ENCODE measurements at regions of chr2 and their contacts with region 1.

Region 1: DNA sequence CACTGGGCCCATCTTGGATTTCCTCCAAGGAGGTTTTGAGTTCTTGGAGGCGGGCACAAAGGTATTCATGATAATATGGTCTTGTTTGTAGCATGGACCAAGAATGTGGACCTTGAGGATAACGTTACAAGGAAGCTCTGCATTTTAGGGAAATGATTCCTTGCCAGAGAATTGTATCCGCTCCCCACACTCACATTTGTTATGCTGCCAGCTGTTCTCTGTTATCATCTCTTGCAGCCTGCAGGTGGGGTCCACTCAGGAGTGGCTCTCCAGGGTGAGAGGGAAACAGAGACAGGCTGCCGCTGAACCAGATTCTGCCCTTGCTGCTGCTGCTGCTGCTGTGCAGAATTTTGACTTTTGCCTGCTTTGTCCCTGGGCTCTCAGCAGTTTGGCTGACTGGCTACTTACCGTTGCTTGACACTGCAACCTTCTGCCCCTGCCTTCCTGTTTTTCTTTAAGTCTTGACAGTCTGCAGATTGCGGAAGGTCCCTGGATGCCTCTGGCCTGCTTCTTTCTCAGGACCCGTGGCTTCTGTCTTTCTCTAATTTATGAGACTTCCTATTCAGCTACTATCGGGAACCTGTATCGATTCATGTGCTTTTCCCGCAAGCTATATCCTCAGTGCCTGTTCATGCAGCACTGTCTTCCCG is 122.3 kb upstream of the DOCK10 start:
- DNase-seq: no peak
- ATAC-seq: peak; percentile 27
- H3K4me3 ChIP-seq: no peak overlapping the region
- H3K27ac ChIP-seq: no peak overlapping the region
- H3K4me1 ChIP-seq: peaks cover 5% of the 10 kb centered on the region
- H3K27me3 ChIP-seq: no peaks in the 10 kb centered on the region
- CTCF ChIP-seq: no peak
- POLR2A ChIP-seq: no peak
- RAD21 ChIP-seq: no peak

Region 2: DNA sequence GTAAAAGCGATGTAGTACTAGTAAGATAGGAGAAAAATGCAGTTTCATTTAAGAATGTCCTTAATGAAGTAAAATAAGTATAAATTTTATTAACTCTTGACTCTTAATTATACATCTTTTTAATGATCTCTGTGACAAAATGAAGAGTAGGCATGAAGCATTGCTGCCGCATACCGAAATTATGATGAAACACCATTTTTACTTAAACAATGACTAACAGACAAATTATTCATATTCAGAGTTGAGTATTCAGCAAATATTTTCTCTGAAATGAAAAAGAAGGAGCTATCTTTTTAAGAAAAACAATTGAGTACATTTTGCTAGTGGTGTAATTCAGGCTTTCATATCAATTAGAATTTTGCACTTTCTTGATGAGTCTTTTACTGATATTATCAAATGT is 28.3 kb after region 1 on chr2:
- CTCF ChIA-PET with region 1: no interaction called
- POLR2A ChIA-PET with region 1: no interaction called
- dilution Hi-C with region 1: no loop called
- in situ Hi-C with region 1: no loop called
- intact Hi-C with region 1: no loop called
- DNase-seq: peak; percentile 47
- ATAC-seq: peak; percentile 38; the same call in 1 of the 2 replicates
- H3K4me3 ChIP-seq: no peak overlapping the region
- H3K27ac ChIP-seq: no peak overlapping the region
- H3K4me1 ChIP-seq: peaks cover 2% of the 10 kb centered on the region; the same call in 1 of the 2 replicates
- H3K27me3 ChIP-seq: no peaks in the 10 kb centered on the region
- CTCF ChIP-seq: no peak
- POLR2A ChIP-seq: no peak
- RAD21 ChIP-seq: no peak

Region 3: GRCh38 chr2:225366731-225367130 is 202.2 kb after region 1 on chr2:
- CTCF ChIA-PET with region 1: no interaction called
- POLR2A ChIA-PET with region 1: no interaction called
- dilution Hi-C with region 1: no loop called
- in situ Hi-C with region 1: no loop called
- intact Hi-C with region 1: loop called (anchors 1 kb)
- DNase-seq: no peak
- ATAC-seq: no peak
- H3K4me3 ChIP-seq: no peak overlapping the region
- H3K27ac ChIP-seq: no peak overlapping the region
- H3K4me1 ChIP-seq: no peaks in the 10 kb centered on the region
- H3K27me3 ChIP-seq: no peaks in the 10 kb centered on the region; the same call in 1 of the 2 replicates
- CTCF ChIP-seq: no peak
- POLR2A ChIP-seq: no peak
- RAD21 ChIP-seq: no peak

Region 4: GRCh38 chr2:225725726-225726125 is 561.2 kb after region 1 on chr2:
- CTCF ChIA-PET with region 1: no interaction called
- POLR2A ChIA-PET with region 1: no interaction called
- dilution Hi-C with region 1: no loop called
- in situ Hi-C with region 1: no loop called
- intact Hi-C with region 1: no loop called
- DNase-seq: peak; percentile 18
- ATAC-seq: no peak
- H3K4me3 ChIP-seq: no peak overlapping the region
- H3K27ac ChIP-seq: no peak overlapping the region
- H3K4me1 ChIP-seq: no peaks in the 10 kb centered on the region
- H3K27me3 ChIP-seq: no peaks in the 10 kb centered on the region
- CTCF ChIP-seq: no peak
- POLR2A ChIP-seq: no peak
- RAD21 ChIP-seq: no peak

Measured in IMR-90 (cell line).